Activated CD4-positive, alpha-beta memory T cell treated with anti-CD3 and anti-CD28 coated beads, Interleukin-2, amount 10 ng/mL, durations not matched to agents 7 days and 5 days (primary cell): ENCODE measurements at regions of chr1 and their contacts with region 1.

Region 1: DNA sequence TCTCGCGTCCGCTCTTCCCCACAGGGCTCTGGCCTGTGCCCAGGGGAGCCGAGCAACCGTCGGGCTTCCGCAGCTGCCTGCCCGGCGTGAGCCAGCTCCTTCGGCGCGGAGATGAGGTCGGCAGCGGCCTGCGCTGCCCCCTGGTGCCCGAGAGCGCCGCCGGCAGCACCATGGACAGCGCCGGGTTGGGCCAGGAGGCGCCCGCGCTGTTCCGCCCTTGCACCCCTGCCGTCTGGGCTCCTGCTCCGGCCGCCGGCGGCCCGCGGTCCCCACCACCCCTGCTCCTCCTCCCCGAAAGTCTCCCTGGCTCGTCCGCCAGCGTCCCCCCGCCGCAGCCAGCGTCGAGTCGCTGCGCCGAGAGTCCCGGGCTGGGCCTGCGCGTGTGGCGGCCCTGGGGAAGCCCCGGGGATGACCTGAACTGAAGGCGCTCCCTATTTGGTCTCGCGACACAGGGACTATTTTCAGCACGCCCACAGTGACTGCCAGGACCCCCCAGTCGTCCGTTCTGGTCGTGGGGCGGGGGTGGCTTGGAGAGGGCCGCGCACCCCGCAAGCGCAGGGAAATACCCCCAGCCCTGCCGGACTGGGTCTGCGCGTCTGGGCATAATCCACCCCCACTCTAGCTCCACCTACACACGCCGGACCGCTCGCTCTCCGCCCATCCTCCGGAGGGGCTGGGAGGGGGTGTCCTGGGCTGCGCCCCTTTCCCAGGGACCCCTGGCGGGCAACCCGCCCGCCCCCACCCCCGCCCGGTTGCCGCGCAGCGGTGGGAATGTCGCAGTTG is 1.3 kb downstream of the HES3 start:
- DNase-seq: peak; percentile 83
- H3K4me3 Mint-ChIP-seq: no peak overlapping the region
- H3K27ac Mint-ChIP-seq: no peak overlapping the region
- H3K4me1 Mint-ChIP-seq: peaks cover 24% of the 10 kb centered on the region
- H3K27me3 Mint-ChIP-seq: peaks cover 59% of the 10 kb centered on the region

Region 2: DNA sequence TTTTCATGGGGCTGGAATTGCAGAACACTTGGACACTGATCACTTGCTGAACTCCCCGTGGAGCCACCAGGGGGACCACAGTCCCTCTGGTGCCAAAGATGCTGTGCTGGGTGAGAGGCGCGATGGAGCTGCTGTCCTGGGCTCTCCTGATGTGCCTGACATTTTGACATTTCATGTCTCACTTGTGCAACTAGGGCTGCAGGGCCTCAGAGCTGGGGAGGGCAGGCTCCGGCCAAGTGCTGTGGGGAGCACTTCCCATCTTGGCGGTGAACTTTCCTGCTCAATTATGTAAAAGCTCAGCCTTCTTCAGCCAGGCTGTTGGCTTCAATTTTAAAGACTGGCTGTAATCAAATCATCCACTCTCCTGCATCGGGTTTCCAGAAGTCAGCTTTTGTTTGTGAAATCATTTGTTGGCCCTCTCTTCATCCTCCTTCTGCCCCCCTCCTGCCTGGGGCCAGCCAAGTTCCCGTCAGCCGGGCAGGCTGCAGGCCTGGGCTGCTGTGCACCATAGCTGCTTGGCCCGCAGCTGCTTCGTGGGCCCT is 162.8 kb before region 1 on chr1:
- CTCF ChIA-PET with region 1: no interaction called
- POLR2A ChIA-PET with region 1: no interaction called
- DNase-seq: no peak
- H3K4me3 Mint-ChIP-seq: no peak overlapping the region
- H3K27ac Mint-ChIP-seq: no peak overlapping the region
- H3K4me1 Mint-ChIP-seq: no peaks in the 10 kb centered on the region
- H3K27me3 Mint-ChIP-seq: no peaks in the 10 kb centered on the region

Region 3: GRCh38 chr1:6205849-6206519 is 39.3 kb before region 1 on chr1 and contains the start of gene RNF207:
- CTCF ChIA-PET with region 1: interaction called, 16 read pairs
- POLR2A ChIA-PET with region 1: no interaction called
- DNase-seq: peak; percentile 56
- H3K4me3 Mint-ChIP-seq: peak within 1 kb of the TSS; percentile 70
- H3K27ac Mint-ChIP-seq: peak within 1 kb of the TSS; percentile 44
- H3K4me1 Mint-ChIP-seq: peaks cover 24% of the 10 kb centered on the region
- H3K27me3 Mint-ChIP-seq: peaks cover 9% of the 10 kb centered on the region
- total RNA-seq, gene RNF207: 12.4 to 16.4 TPM

Region 4: DNA sequence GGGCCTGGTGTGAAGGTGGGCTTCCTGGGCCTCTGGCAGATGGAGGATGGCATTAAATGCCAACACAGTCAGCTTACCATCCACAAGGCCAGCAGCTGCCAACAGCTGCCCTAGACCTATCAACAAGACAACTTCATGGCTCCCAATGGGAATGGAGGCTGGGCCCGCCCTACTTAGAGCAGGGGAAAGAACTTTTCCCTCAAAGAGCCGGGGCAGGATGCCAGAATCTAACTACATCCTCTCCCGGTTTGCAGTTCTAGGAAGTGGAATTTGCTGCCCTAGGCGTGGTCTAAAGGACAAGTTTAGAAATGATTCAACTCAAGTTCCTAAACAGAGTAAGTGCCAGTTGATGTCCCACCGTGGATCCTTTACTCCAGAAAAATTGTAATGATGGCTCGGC is 22.6 kb before region 1 on chr1:
- CTCF ChIA-PET with region 1: no interaction called
- POLR2A ChIA-PET with region 1: no interaction called
- DNase-seq: no peak
- H3K4me3 Mint-ChIP-seq: no peak overlapping the region
- H3K27ac Mint-ChIP-seq: no peak overlapping the region
- H3K4me1 Mint-ChIP-seq: peaks cover 17% of the 10 kb centered on the region
- H3K27me3 Mint-ChIP-seq: no peaks in the 10 kb centered on the region

Region 5: DNA sequence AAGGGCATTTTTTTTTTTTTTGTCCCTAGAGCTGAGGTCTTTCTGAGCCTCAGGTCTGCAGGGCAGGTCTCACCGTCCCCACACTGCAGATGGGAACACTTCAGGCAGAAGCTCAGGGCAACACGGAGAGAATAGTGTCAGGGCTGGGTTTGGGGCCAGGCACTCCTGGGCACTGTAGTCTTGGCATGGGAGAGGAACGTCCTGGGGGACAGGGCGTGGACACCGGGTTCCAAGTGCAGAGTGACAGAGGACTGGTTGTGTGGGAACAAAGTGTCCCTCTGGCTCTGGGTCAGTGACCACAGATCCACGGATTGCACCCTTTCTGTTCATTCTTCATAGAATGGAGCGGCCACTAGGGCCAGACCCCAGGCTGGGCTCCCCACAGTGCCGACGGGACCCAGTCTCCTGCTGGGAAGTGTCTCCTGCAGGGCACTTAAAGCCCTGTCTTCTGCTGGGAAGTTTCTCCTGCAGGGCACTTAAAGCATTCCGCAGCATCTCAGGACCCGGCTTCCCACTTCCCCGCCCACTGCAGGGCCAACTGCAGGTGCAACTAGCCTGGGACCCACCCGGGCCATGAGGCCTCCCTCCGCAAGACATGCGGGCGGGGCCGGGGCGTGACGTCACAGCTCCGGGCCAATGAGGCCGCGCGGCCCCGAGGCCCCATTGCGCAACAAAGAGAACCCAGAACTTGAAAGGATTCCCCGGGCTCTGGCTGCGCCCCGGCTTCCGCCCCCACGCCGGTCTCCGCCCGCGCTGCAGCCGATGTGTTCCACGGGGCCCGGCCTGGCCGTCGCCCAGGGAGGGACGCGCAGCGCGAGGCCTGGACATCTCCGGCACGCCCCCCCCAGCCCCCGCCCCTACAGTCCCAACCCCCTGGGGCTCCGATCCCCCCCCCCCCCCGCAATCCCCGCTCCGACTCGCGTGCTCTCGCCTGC is 14.5 kb after region 1 on chr1:
- CTCF ChIA-PET with region 1: interaction called, 18 read pairs
- POLR2A ChIA-PET with region 1: interaction called, 5 read pairs
- DNase-seq: peak; percentile 85
- H3K4me3 Mint-ChIP-seq: peak overlapping the region; percentile 50
- H3K27ac Mint-ChIP-seq: no peak overlapping the region
- H3K4me1 Mint-ChIP-seq: peaks cover 34% of the 10 kb centered on the region
- H3K27me3 Mint-ChIP-seq: peaks cover 14% of the 10 kb centered on the region

Region 6: DNA sequence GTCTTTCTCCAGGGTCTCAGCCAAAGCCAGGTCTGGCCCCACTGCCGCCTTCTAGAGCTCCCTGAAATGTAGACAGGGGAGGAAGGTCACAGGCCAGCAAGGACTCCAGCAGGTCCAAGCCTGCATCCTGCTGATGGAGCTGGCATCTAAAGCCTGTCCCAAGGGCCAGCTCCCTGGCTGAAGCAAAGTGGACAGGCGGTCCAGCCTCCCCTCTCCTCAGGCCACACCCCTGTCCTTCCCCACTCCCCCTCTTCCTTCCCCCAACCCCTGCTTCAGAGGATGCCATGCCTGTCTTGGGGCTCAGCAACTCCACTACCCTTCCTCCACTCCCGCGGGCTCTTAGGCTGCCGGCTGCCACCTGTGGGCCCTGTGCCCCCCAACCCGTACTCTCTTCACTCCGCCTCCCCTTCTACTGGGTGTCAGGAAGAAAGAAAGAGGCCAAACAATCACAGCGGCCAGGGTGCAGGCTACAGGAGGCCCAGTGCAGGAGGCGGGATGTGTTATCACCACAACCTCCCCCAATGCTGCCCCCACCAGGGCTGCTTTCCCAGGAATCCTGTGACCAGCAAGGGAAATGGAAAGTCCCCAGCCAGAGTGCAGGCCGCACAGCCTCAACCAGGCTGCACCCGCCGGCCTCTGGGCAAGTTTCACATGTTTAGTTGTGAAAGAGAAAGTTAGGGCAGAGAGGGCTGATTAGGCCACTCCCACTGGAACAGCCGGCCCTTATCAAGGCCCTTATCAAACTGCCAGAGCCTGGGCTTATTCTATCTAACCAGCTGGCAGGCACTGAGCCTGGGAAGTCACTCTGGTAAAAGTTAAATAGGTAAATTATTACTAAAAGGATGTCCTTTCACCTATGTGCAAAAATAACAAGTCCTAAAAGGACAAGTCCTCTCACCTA is 114.2 kb after region 1 on chr1:
- CTCF ChIA-PET with region 1: interaction called, 10 read pairs
- POLR2A ChIA-PET with region 1: no interaction called
- DNase-seq: peak; percentile 72
- H3K4me3 Mint-ChIP-seq: peak overlapping the region; percentile 58
- H3K27ac Mint-ChIP-seq: peak overlapping the region; percentile 85
- H3K4me1 Mint-ChIP-seq: peaks cover 44% of the 10 kb centered on the region
- H3K27me3 Mint-ChIP-seq: no peaks in the 10 kb centered on the region

Region 7: GRCh38 chr1:6393400-6394187 is 148.3 kb after region 1 on chr1 and contains the start of gene ACOT7:
- CTCF ChIA-PET with region 1: interaction called, 61 read pairs
- POLR2A ChIA-PET with region 1: interaction called, 8 read pairs
- DNase-seq: peak; percentile 92
- H3K4me3 Mint-ChIP-seq: peak within 1 kb of the TSS; percentile 86
- H3K27ac Mint-ChIP-seq: peak within 1 kb of the TSS; percentile 88
- H3K4me1 Mint-ChIP-seq: peaks cover 40% of the 10 kb centered on the region
- H3K27me3 Mint-ChIP-seq: no peaks in the 10 kb centered on the region
- total RNA-seq, gene ACOT7: 56.8 to 58.6 TPM

Region 8: GRCh38 chr1:6401673-6402072 is 156.4 kb after region 1 on chr1:
- CTCF ChIA-PET with region 1: interaction called, 61 read pairs
- POLR2A ChIA-PET with region 1: interaction called, 4 read pairs
- DNase-seq: no peak
- H3K4me3 Mint-ChIP-seq: no peak overlapping the region
- H3K27ac Mint-ChIP-seq: no peak overlapping the region
- H3K4me1 Mint-ChIP-seq: peaks cover 12% of the 10 kb centered on the region
- H3K27me3 Mint-ChIP-seq: peaks cover 16% of the 10 kb centered on the region

Region 9: DNA sequence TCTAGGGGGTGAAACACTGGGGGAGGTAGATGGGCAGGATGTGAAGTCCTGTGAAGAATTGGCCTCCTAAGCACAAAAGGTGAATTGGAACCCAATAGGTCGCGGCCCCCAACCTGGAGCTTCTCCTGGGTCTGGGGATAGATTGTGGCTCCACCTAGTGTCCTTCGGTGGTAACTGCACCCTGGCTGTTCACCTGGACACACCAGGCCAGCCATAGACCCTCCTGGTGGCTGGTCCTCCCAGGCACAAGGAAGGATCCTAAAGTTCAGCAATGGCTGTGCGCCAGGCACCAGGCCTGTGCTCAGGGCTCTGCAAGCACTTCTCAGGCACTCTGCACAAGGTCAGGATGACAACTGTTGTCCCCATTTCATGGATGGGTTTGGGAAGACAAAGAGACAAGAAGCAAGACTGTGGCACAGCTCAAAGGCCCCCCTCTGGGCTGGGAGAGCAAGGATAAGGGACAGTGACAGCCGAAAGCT is 192.8 kb after region 1 on chr1:
- CTCF ChIA-PET with region 1: interaction called, 45 read pairs
- POLR2A ChIA-PET with region 1: no interaction called
- DNase-seq: peak; percentile 74
- H3K4me3 Mint-ChIP-seq: no peak overlapping the region
- H3K27ac Mint-ChIP-seq: no peak overlapping the region
- H3K4me1 Mint-ChIP-seq: peaks cover 7% of the 10 kb centered on the region
- H3K27me3 Mint-ChIP-seq: peaks cover 30% of the 10 kb centered on the region